HEK293 (cell line): ENCODE measurements at regions of chr19 and their contacts with region 1.

Region 1: DNA sequence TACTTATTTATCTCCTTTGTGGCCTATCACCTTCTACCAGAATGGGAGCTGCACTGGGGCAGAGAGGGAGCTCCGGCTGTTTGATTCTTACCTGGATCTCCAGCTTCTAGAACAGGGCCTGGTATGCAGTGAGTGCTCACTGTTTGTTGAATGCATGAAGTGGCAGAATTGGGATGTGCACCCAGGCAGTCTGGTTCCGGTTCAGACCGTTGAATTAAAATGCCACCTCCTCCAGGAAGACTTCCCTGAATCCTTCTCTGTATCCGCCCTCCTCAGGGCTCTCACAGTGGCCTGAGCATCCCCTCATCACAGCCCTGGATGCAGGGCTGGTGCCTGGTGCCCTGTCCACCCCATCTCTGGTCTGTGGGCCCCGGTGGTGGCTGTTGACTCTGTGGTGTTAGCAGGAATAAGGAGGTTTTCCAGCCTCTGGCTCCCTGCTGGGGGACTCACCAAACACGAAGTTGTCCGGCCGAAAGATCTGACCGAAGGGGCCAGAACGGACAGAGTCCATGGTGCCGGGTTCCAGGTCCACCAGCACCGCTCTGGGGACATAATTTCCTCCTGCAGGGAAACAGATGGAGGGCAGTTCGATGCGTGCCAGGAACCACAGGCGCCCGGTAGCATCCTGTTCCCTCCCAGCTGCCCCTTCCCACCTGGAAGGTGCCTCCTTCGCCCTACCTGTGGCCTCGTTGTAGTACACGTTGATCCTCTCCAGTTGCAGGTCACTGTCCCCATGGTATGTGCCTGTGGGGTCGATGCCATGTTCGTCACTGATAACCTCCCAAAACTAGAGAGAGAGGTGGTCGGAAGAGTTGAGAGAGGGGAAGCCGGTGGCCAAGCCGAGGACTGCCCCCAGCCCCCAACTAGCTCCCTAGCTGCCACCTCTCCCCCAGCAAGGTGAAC is 1.0 kb downstream of the TUBB4A start:
- H3K4me3 ChIP-seq: no peak overlapping the region
- H3K27ac ChIP-seq: no peak overlapping the region
- H3K4me1 ChIP-seq: no peaks in the 10 kb centered on the region; the same call in 1 of the 2 replicates
- CTCF ChIP-seq: no peak

Region 2: GRCh38 chr19:6794686-6795431 is 293.8 kb after region 1 on chr19:
- CTCF ChIA-PET with region 1: interaction called, 10 read pairs
- POLR2A ChIA-PET with region 1: no interaction called
- H3K4me3 ChIP-seq: no peak overlapping the region
- H3K27ac ChIP-seq: no peak overlapping the region
- H3K4me1 ChIP-seq: peaks cover 2% of the 10 kb centered on the region; the same call in 1 of the 2 replicates
- CTCF ChIP-seq: no peak